ENCODE measurements at regions of chr3 and their contacts with region 1.

Region 1: DNA sequence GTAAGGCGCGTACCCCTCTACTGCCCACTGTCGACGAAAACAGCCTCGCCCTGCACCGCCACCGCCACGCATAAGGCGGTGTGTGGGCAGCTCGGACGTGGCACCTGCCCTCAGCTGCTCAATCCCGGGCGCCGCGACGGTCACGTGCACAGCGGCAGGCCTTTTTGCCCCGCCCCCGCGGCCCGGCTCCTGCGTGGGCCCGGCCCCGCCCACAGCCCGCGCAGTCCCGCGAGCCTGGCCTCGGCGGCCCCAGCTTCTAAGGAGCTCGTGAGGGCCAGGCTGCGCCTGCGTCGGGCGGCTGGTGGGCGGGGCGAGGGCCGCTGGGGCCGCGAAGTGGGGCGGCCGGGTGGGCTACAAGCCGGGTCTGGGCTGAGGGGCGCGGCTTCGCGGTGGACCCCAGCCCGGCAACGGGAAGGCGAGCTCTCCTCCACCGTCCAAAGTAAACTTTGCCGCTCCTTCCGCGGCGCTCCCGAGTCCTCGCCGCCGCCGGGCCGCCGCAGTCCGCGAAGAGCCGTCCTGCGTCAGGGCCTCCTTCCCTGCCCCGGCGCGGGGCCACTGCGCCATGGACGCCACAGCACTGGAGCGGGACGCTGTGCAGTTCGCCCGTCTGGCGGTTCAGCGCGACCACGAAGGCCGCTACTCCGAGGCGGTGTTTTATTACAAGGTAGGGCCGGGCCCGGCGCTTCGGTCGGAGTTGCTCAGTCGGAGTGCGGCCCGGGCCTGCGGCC is at the start of gene CAPN7:
- DNase-seq: peak; percentile 97
- ATAC-seq: peak; percentile 89
- H3K4me3 ChIP-seq: peak within 1 kb of the TSS; percentile 71 to 95 (median 78)
- H3K4me3 Mint-ChIP-seq: peak within 1 kb of the TSS; percentile 94
- H3K27ac ChIP-seq: peak within 1 kb of the TSS; percentile 68 to 93
- H3K27ac Mint-ChIP-seq: peak within 1 kb of the TSS; percentile 93
- H3K4me1 ChIP-seq: peaks cover 16 to 19% of the 10 kb centered on the region in 2 donors
- H3K4me1 Mint-ChIP-seq: peaks cover 25% of the 10 kb centered on the region
- H3K27me3 ChIP-seq: no peaks in the 10 kb centered on the region
- H3K27me3 Mint-ChIP-seq: no peaks in the 10 kb centered on the region
- CTCF ChIP-seq: no peak
- total RNA-seq, gene CAPN7: 85.9 and 95.5 TPM in 2 replicates

Region 2: GRCh38 chr3:15051531-15051930 is 154.6 kb before region 1 on chr3:
- CTCF ChIA-PET with region 1: no interaction called
- POLR2A ChIA-PET with region 1: interaction called, 5 read pairs
- intact Hi-C with region 1: loop called (anchors 1 kb)
- DNase-seq: peak; percentile 41
- ATAC-seq: no peak
- H3K4me3 ChIP-seq: no peak overlapping the region
- H3K4me3 Mint-ChIP-seq: peak overlapping the region; percentile 13
- H3K27ac ChIP-seq: peak overlapping the region; percentile 72 to 86
- H3K27ac Mint-ChIP-seq: peak overlapping the region; percentile 93
- H3K4me1 ChIP-seq: peaks cover 52 to 64% of the 10 kb centered on the region in 2 donors
- H3K4me1 Mint-ChIP-seq: peaks cover 65% of the 10 kb centered on the region
- H3K27me3 ChIP-seq: no peaks in the 10 kb centered on the region
- H3K27me3 Mint-ChIP-seq: no peaks in the 10 kb centered on the region
- CTCF ChIP-seq: peak; percentile 59

Region 3: DNA sequence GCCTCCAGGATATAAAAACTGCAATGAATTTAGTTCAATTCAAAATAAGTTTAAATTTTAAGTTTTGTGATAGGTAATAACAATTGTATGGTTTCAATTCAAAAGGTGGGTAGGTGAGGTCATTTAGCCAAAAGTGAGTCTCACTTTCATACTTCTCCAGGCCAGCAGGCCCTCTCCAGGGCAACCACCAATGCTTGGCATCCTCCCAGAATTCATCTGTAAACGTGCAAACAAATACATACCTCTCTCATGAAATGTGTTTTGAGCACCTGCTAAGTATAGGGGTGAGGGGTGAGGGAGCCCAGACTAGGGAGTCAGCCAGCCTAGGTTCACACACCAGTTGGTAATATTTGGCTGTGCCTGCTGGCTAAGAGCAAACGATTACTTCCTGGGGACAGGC is 85.1 kb before region 1 on chr3:
- CTCF ChIA-PET with region 1: interaction called, 12 read pairs
- POLR2A ChIA-PET with region 1: no interaction called
- intact Hi-C with region 1: no loop called
- DNase-seq: peak; percentile 1
- ATAC-seq: no peak
- H3K4me3 ChIP-seq: no peak overlapping the region
- H3K4me3 Mint-ChIP-seq: no peak overlapping the region
- H3K27ac ChIP-seq: no peak overlapping the region
- H3K27ac Mint-ChIP-seq: no peak overlapping the region
- H3K4me1 ChIP-seq: no peaks in the 10 kb centered on the region
- H3K4me1 Mint-ChIP-seq: peaks cover 2% of the 10 kb centered on the region
- H3K27me3 ChIP-seq: peaks cover 0 to 6% (median 0%) of the 10 kb centered on the region in 4 experiments
- H3K27me3 Mint-ChIP-seq: no peaks in the 10 kb centered on the region
- CTCF ChIP-seq: no peak

Region 4: DNA sequence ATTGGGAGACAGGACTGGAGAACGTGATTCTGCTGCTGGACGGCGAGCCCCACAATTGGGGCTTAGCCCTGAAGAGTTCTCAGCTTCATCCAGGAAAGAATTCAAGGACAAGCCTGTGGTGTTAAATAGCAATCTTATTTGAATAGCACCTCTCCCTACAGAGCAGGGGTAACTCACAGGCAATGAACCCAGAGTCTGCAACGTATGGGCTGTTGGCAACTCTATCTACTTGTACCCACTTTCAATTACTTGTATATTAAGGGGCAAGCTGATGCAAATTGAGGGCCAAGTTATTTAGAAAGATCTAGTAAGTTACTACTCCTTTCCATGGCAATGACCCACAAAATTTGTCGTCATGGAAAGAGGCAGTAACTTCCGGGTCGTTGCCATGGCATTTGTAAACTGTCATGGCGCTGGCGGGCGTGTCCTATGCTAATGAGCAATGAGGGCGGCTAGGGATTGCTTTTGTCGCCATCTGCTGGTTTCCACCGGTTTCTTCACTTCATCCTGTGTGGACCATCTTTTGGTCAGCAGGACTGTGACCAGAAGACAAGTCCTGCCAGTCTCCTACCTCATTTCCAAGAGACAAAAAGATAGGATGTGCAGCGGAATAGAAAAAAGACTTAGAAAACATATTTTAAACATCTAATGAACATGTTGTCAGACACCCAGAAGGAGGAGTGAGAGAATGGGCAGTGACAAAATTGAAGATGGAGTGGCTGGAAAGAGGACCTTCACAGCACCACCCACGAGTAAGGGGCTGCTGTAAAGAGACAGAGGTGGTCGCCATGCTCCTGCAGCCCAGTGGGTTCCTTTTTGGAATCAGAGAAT is 172.1 kb after region 1 on chr3:
- CTCF ChIA-PET with region 1: interaction called, 6 read pairs
- POLR2A ChIA-PET with region 1: no interaction called
- intact Hi-C with region 1: loop called (anchors 1 kb)
- DNase-seq: peak; percentile 97
- ATAC-seq: peak; percentile 90
- H3K4me3 ChIP-seq: peak overlapping the region in 1 of 5 experiments; percentile 9
- H3K4me3 Mint-ChIP-seq: peak overlapping the region; percentile 53
- H3K27ac ChIP-seq: peak overlapping the region; percentile 88 to 91
- H3K27ac Mint-ChIP-seq: peak overlapping the region; percentile 95
- H3K4me1 ChIP-seq: peaks cover 37% of the 10 kb centered on the region in 2 donors
- H3K4me1 Mint-ChIP-seq: peaks cover 29% of the 10 kb centered on the region
- H3K27me3 ChIP-seq: no peaks in the 10 kb centered on the region
- H3K27me3 Mint-ChIP-seq: no peaks in the 10 kb centered on the region
- CTCF ChIP-seq: peak; percentile 96

Region 5: DNA sequence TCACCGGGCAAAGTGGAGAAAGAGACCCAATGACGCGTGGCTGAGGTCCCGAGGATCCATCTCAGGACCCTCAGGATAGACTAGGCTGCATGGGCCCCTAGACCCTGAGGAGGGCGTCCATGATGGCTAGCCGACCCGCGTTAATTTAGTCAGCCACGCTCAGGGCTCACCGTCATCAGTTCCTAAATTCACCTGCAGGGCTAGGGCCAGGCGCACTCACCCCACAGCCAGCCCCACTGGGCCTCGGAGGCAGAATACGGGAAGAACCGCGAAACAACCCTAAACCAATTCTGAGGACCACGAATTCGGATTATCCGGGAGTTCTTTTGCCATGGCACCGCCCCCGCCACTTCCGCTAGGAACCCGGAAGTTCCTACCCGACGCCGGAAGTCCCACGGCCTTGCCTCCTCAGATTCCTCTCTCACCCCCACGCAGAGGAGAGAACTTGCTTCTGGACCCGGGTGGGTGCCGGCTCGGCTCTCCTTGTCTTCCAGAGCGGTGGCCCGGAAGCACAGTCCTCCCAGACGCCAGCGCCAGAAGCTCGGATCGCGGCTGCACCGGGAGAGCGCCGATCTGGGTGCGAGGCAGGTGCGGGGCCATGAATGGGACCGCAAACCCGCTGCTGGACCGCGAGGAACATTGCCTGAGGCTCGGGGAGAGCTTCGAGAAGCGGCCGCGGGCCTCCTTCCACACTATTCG is 221.2 kb after region 1 on chr3 and contains the starts of genes EAF1 and METTL6:
- CTCF ChIA-PET with region 1: interaction called, 7 read pairs
- POLR2A ChIA-PET with region 1: no interaction called
- intact Hi-C with region 1: loop called (anchors 1 kb)
- DNase-seq: peak; percentile 88
- ATAC-seq: peak; percentile 89
- H3K4me3 ChIP-seq: peak within 1 kb of the TSS; percentile 88 to 99 (median 94)
- H3K4me3 Mint-ChIP-seq: peak within 1 kb of the TSS; percentile 95
- H3K27ac ChIP-seq: peak within 1 kb of the TSS; percentile 75 to 85
- H3K27ac Mint-ChIP-seq: peak within 1 kb of the TSS; percentile 92
- H3K4me1 ChIP-seq: peaks cover 19 to 28% of the 10 kb centered on the region in 2 donors
- H3K4me1 Mint-ChIP-seq: peaks cover 45% of the 10 kb centered on the region
- H3K27me3 ChIP-seq: no peaks in the 10 kb centered on the region
- H3K27me3 Mint-ChIP-seq: no peaks in the 10 kb centered on the region
- CTCF ChIP-seq: peak; percentile 56
- total RNA-seq, gene EAF1: 19.8 TPM in 2 replicates
- total RNA-seq, gene METTL6: 23.9 and 27.1 TPM in 2 replicates

Region 6: DNA sequence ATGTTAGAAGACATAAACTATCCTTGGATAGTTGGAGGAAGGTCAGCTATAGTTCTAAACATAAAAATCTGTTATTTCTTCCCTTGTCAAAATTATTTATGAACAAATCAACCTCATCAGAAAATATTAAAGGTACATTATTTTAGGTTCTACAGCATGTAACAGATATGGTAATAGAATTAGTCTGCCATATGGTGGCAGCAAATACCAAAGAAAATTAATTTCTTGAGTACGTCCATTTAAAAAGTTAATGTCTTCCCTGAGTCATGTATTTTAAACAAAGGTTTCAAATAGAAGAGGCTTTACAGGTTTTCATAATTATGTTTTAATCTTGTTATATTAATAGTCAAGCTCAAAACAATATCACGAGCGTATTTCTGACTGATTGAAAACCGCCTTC is 609.6 kb after region 1 on chr3:
- CTCF ChIA-PET with region 1: interaction called, 30 read pairs
- POLR2A ChIA-PET with region 1: no interaction called
- intact Hi-C with region 1: no loop called
- DNase-seq: peak; percentile 53
- ATAC-seq: no peak
- H3K4me3 ChIP-seq: no peak overlapping the region
- H3K4me3 Mint-ChIP-seq: no peak overlapping the region
- H3K27ac ChIP-seq: no peak overlapping the region
- H3K27ac Mint-ChIP-seq: no peak overlapping the region
- H3K4me1 ChIP-seq: peaks cover 6 to 8% of the 10 kb centered on the region in 2 donors
- H3K4me1 Mint-ChIP-seq: peaks cover 24% of the 10 kb centered on the region
- H3K27me3 ChIP-seq: no peaks in the 10 kb centered on the region
- H3K27me3 Mint-ChIP-seq: no peaks in the 10 kb centered on the region
- CTCF ChIP-seq: peak; percentile 63

Region 7: DNA sequence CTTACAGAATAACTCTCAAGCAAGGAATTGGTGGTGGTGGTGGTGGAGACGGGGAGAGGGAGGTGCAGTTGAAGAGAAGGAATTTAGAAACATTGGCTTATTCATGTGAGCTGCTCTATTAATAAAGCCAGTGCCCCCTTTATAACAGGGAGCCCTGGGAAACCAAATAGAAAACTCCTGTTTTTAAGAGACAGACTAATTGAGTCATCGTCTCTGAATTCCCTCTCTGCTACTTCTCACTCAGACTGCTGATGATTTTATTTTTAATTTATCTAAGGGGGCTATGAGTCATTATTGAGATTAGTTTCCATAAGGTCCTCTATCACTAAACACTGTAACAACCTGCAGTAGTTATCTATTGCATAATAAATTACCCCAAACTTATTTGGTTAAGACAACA is 822.5 kb after region 1 on chr3:
- CTCF ChIA-PET with region 1: no interaction called
- POLR2A ChIA-PET with region 1: no interaction called
- intact Hi-C with region 1: no loop called
- DNase-seq: no peak
- ATAC-seq: no peak
- H3K4me3 ChIP-seq: no peak overlapping the region
- H3K4me3 Mint-ChIP-seq: no peak overlapping the region
- H3K27ac ChIP-seq: no peak overlapping the region
- H3K27ac Mint-ChIP-seq: no peak overlapping the region
- H3K4me1 ChIP-seq: no peaks in the 10 kb centered on the region
- H3K4me1 Mint-ChIP-seq: no peaks in the 10 kb centered on the region
- H3K27me3 ChIP-seq: peaks cover 0 to 4% (median 0%) of the 10 kb centered on the region in 4 experiments
- H3K27me3 Mint-ChIP-seq: peaks cover 30% of the 10 kb centered on the region
- CTCF ChIP-seq: no peak

Region 8: DNA sequence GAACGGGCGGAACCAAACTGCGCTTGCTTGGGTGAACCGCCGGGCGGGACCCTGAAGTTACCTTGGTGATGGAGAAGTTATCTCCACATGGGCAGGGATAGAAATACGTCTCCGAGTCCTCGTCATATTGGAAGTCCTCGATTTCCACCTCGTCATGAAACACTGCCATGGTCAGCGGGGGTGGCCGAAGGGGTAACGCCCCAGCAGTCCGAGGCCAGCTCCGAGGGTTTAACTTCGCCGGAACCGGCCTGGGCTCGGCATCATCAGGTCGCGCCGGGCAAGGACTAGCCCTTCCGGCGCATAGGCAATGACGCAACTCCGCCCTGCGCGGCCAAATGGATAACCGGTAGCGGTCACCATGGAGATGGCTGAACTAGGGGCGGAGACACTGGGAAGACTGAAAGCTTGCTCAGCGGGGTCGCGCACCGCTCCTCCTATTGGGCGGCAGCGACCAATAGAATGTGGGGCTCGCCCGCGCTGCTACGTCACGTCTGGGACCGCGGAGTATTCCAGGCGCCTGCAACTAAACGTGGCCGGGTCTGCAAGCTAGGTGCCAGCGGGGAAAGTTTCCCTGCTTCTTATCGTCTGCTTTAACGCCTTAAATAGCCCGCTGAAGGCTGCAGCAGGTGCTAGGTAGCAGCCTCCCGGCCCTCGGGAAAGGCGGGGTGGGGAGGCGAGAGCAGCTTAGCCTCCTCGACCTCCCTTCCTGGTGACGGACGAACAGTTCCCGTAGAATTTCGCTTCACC is 1058.8 kb after region 1 on chr3 and contains the starts of genes DPH3 and OXNAD1:
- CTCF ChIA-PET with region 1: interaction called, 5 read pairs
- POLR2A ChIA-PET with region 1: no interaction called
- intact Hi-C with region 1: loop called (anchors 2 kb)
- DNase-seq: peak; percentile 99
- ATAC-seq: peak; percentile 96
- H3K4me3 ChIP-seq: peak within 1 kb of the TSS; percentile 80 to 97 (median 90)
- H3K4me3 Mint-ChIP-seq: peak within 1 kb of the TSS; percentile 99
- H3K27ac ChIP-seq: peak within 1 kb of the TSS; percentile 85 to 97
- H3K27ac Mint-ChIP-seq: peak within 1 kb of the TSS; percentile 99
- H3K4me1 ChIP-seq: peaks cover 12 to 13% of the 10 kb centered on the region in 2 donors
- H3K4me1 Mint-ChIP-seq: peaks cover 25% of the 10 kb centered on the region
- H3K27me3 ChIP-seq: no peaks in the 10 kb centered on the region
- H3K27me3 Mint-ChIP-seq: no peaks in the 10 kb centered on the region
- CTCF ChIP-seq: no peak
- total RNA-seq, gene DPH3: 11.5 and 12.9 TPM in 2 replicates
- total RNA-seq, gene OXNAD1: 11.2 and 12.3 TPM in 2 replicates

Region 9: DNA sequence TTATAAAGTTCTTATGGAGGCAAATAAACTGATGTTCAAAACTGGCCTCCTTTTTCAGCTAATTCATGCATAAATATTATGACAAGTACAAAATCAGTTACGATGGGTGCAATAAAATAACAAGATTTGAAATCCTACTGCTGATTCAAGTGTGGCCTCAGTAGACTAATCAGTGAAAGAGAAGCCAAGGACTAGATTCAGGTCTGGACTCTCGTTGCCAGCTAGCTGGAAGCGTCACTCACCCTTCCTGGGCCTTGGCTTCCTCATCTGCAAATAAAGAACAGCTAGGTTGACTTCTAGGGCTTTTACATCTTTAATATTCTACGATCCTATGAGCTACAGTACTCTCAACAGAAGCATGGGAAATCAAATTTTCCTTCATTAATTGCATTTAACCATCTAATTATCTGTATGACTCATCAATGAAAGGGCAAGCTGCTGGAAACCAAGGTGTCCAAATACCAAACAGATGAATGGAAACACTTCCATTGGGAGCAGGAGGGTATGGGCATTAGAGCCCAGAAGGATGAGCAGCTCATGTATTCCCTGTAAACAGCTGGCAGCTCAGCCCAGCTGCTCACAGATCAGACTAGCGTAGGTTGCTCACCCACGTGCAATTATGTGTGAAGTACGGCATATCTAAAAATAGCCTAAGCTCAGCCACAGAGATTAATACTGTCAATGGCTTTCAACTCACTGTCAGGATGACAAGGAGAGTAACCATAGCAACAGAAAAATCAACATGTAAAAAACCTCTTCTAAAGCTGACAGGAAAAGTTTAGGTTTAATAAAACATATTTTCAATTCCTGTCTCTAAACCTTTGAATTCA is 1973.5 kb after region 1 on chr3:
- CTCF ChIA-PET with region 1: no interaction called
- POLR2A ChIA-PET with region 1: no interaction called
- intact Hi-C with region 1: no loop called
- DNase-seq: peak; percentile 68
- ATAC-seq: peak; percentile 61
- H3K4me3 ChIP-seq: no peak overlapping the region
- H3K4me3 Mint-ChIP-seq: no peak overlapping the region
- H3K27ac ChIP-seq: no peak overlapping the region
- H3K27ac Mint-ChIP-seq: peak overlapping the region; percentile 53
- H3K4me1 ChIP-seq: peaks cover 22% of the 10 kb centered on the region in 2 donors
- H3K4me1 Mint-ChIP-seq: peaks cover 27% of the 10 kb centered on the region
- H3K27me3 ChIP-seq: no peaks in the 10 kb centered on the region
- H3K27me3 Mint-ChIP-seq: no peaks in the 10 kb centered on the region
- CTCF ChIP-seq: no peak

Measured in B cell (primary cell).